Activated B cell treated with CpG ODN at 0.5 μM for 24 hours (primary cell): ENCODE measurements at regions of chr4 and their contacts with region 1.

Region 1: GRCh38 chr4:11428899-11429698 is 405 bp upstream of the HS3ST1 start:
- DNase-seq: peak; percentile 72
- ATAC-seq: peak; percentile 90
- H3K4me3 Mint-ChIP-seq: peak overlapping the region; percentile 91
- H3K27ac Mint-ChIP-seq: peak overlapping the region; percentile 80
- H3K4me1 Mint-ChIP-seq: peaks cover 83% of the 10 kb centered on the region
- H3K27me3 Mint-ChIP-seq: peaks cover 2% of the 10 kb centered on the region
- CTCF ChIP-seq: no peak

Region 2: GRCh38 chr4:10461091-10461849 is 967.8 kb before region 1 on chr4:
- CTCF ChIA-PET with region 1: no interaction called
- POLR2A ChIA-PET with region 1: no interaction called
- intact Hi-C with region 1: loop called (anchors 5 kb)
- DNase-seq: peak; percentile 79
- ATAC-seq: peak; percentile 85
- H3K4me3 Mint-ChIP-seq: peak overlapping the region; percentile 78
- H3K27ac Mint-ChIP-seq: no peak overlapping the region
- H3K4me1 Mint-ChIP-seq: peaks cover 19% of the 10 kb centered on the region
- H3K27me3 Mint-ChIP-seq: peaks cover 51% of the 10 kb centered on the region
- CTCF ChIP-seq: peak; percentile 83

Region 3: GRCh38 chr4:10684631-10685030 is 744.5 kb before region 1 on chr4 and contains the start of gene CLNK:
- CTCF ChIA-PET with region 1: no interaction called
- POLR2A ChIA-PET with region 1: no interaction called
- intact Hi-C with region 1: loop called (anchors 5 kb)
- DNase-seq: no peak
- ATAC-seq: peak; percentile 74
- H3K4me3 Mint-ChIP-seq: peak within 1 kb of the TSS; percentile 78
- H3K27ac Mint-ChIP-seq: peak within 1 kb of the TSS; percentile 87
- H3K4me1 Mint-ChIP-seq: peaks cover 55% of the 10 kb centered on the region
- H3K27me3 Mint-ChIP-seq: no peaks in the 10 kb centered on the region
- CTCF ChIP-seq: no peak
- total RNA-seq, gene CLNK: 0.37 and 0.58 TPM in 2 replicates

Region 4: GRCh38 chr4:10983268-10983667 is 445.8 kb before region 1 on chr4:
- CTCF ChIA-PET with region 1: interaction called, 3 read pairs
- POLR2A ChIA-PET with region 1: no interaction called
- intact Hi-C with region 1: loop called (anchors 2 kb)
- DNase-seq: no peak
- ATAC-seq: peak; percentile 74
- H3K4me3 Mint-ChIP-seq: peak overlapping the region; percentile 25
- H3K27ac Mint-ChIP-seq: no peak overlapping the region
- H3K4me1 Mint-ChIP-seq: peaks cover 25% of the 10 kb centered on the region
- H3K27me3 Mint-ChIP-seq: no peaks in the 10 kb centered on the region
- CTCF ChIP-seq: no peak

Region 5: GRCh38 chr4:11623726-11624037 is 194.6 kb after region 1 on chr4:
- CTCF ChIA-PET with region 1: no interaction called
- POLR2A ChIA-PET with region 1: no interaction called
- intact Hi-C with region 1: loop called (anchors 5 kb)
- DNase-seq: no peak
- ATAC-seq: no peak
- H3K4me3 Mint-ChIP-seq: no peak overlapping the region
- H3K27ac Mint-ChIP-seq: no peak overlapping the region
- H3K4me1 Mint-ChIP-seq: peaks cover 4% of the 10 kb centered on the region
- H3K27me3 Mint-ChIP-seq: no peaks in the 10 kb centered on the region
- CTCF ChIP-seq: no peak

Region 6: GRCh38 chr4:11640584-11640983 is 211.5 kb after region 1 on chr4:
- CTCF ChIA-PET with region 1: no interaction called
- POLR2A ChIA-PET with region 1: no interaction called
- intact Hi-C with region 1: no loop called
- DNase-seq: no peak
- ATAC-seq: no peak
- H3K4me3 Mint-ChIP-seq: no peak overlapping the region
- H3K27ac Mint-ChIP-seq: no peak overlapping the region
- H3K4me1 Mint-ChIP-seq: no peaks in the 10 kb centered on the region
- H3K27me3 Mint-ChIP-seq: peaks cover 5% of the 10 kb centered on the region
- CTCF ChIP-seq: no peak